Posterior vena cava (tissue), 2 donors: ENCODE measurements at regions of chr2 and their contacts with region 1.

Region 1: GRCh38 chr2:32772638-32773447 is 145.0 kb downstream of the TTC27 start:
- DNase-seq: no peak

Region 2: GRCh38 chr2:32946314-32947075 is 173.7 kb after region 1 on chr2 and contains the start of gene LTBP1:
- intact Hi-C with region 1: loop called in 1 of 2 experiments (anchors 5 kb)
- DNase-seq: peak; percentile 88
- total RNA-seq, gene LTBP1: 206 to 235 TPM

Region 3: DNA sequence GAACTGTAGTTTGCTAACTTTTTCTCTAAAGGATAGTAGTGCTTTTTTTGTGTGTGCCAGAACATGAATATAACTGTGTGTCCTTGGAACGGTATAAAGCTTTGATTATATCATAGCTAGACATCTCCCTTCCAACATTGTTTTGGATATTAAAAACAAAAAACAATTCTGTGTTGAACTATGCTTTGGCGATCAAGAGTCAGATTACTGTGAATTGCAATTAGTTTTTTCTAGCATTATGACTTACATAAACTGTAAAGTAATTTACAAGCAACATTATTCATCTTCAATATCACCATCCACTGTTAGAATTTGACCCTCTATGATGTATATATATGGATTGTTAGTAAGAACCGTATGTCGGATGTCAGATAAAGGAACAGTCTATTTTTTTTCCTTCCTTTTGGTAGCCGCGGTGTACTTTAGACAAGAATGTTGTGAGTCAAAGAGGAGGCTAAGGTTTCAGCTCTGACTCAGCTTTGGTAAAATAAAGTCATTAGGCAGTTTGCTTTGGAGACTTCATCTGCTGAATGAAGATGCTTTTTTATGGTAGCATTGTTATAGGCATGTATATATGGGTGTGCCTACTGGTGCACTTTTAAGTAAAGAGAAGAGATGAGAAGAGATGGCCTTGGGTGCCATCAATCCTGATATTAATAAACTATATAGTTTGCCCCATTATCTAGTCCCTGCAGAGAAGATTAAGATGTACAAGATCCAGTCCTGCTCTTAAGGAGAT is 250.3 kb after region 1 on chr2:
- intact Hi-C with region 1: loop called in 1 of 2 experiments (anchors 10 kb)
- DNase-seq: no peak

Region 4: GRCh38 chr2:33033606-33034081 is 260.8 kb after region 1 on chr2:
- intact Hi-C with region 1: loop called (anchors 5 to 10 kb)
- DNase-seq: no peak

Region 5: DNA sequence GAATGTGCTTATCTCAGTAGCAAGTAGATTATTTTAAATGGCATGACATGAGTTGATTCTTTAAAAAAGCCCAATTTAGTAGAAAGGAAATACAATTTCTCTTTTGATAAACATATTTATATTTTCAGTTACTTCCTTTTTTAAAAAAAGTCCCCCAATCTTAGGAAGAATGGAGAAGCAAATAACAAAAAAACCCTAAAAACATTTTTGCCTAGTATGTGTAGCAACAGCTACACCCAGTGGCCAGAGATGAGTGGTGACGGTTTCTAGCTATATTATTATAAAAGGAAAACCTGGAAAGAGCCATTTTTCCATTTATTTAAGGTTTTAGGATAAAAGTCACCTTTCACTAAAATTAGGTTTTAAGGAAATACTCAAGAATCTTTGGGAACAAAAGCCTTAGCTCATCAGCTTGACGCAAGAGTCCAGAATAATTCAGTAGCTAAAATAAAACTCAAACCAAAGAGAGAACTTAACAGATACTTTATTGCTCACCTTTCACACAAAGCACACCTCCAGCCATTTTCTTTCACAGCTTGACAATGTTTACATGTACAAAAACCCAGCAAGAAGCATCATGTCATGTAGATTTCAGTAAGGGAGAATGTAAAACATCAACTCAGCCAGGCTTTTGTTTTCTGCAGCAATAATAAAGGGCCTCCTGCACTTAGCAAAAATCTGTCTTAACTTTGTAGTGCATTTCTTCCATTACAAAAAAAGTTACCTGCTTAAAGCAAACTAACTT is 810.5 kb after region 1 on chr2:
- intact Hi-C with region 1: loop called in 1 of 2 experiments (anchors 10 kb)
- DNase-seq: no peak